Transverse colon (tissue), 4 donors: ENCODE measurements at regions of chr4 and their contacts with region 1.

Region 1: GRCh38 chr4:184845367-184846021 is 19.7 kb upstream of the ACSL1 start:
- DNase-seq: no peak
- H3K4me3 ChIP-seq: no peak overlapping the region
- H3K27ac ChIP-seq: no peak overlapping the region
- H3K4me1 ChIP-seq: no peaks in the 10 kb centered on the region
- H3K27me3 ChIP-seq: no peaks in the 10 kb centered on the region
- CTCF ChIP-seq: no peak
- EP300 ChIP-seq: no peak
- POLR2A ChIP-seq: no peak

Region 2: GRCh38 chr4:184825896-184826690 is 19.4 kb before region 1 on chr4 and contains the start of gene ACSL1:
- in situ Hi-C with region 1: no loop called
- intact Hi-C with region 1: no loop called
- DNase-seq: peak; percentile 76
- H3K4me3 ChIP-seq: peak within 1 kb of the TSS; percentile 69 to 85 (median 74)
- H3K27ac ChIP-seq: peak within 1 kb of the TSS; percentile 82 to 83 (median 82)
- H3K4me1 ChIP-seq: peaks cover 0 to 22% (median 11%) of the 10 kb centered on the region in 4 donors
- H3K27me3 ChIP-seq: no peaks in the 10 kb centered on the region
- CTCF ChIP-seq: no peak
- EP300 ChIP-seq: no peak
- POLR2A ChIP-seq: peak; percentile 37
- total RNA-seq, gene ACSL1: 20.6 to 50.0 (median 40.0) TPM

Region 3: DNA sequence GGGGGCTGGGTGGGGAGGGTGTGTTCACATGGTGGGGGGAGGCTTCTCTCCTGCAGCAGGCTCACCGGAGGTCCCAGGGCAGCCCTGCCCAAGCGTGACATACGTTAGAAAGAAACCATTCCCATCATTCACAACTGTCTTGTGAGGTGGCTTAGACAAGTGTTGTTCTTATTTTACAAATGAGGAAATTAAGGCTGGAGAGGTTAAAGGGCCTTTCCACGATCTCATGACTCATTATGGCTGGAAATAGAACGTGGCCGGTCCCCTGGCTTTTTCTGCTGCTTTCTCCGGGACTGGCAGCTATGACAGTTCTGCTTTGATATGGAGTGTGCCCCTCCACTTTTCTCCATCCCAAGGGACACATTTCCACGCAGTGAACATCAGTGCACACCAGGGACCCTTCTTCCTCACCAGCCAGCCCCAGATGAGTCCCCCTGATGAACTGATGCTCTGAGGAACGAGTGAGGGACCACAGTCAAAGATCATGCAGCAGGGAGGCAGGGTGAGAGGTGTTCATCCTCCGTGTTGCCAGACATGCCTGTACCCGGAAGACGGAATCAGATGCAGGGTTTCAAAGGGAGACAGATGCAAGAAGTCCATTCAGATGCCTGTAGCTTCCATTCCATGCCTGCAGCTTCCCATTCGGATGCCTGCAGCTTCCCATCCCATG is 44.3 kb after region 1 on chr4:
- in situ Hi-C with region 1: no loop called
- intact Hi-C with region 1: loop called (anchors 1 kb)
- DNase-seq: no peak
- H3K4me3 ChIP-seq: no peak overlapping the region
- H3K27ac ChIP-seq: no peak overlapping the region
- H3K4me1 ChIP-seq: no peaks in the 10 kb centered on the region
- H3K27me3 ChIP-seq: peaks cover 5% of the 10 kb centered on the region
- CTCF ChIP-seq: no peak
- EP300 ChIP-seq: no peak
- POLR2A ChIP-seq: no peak

Region 4: DNA sequence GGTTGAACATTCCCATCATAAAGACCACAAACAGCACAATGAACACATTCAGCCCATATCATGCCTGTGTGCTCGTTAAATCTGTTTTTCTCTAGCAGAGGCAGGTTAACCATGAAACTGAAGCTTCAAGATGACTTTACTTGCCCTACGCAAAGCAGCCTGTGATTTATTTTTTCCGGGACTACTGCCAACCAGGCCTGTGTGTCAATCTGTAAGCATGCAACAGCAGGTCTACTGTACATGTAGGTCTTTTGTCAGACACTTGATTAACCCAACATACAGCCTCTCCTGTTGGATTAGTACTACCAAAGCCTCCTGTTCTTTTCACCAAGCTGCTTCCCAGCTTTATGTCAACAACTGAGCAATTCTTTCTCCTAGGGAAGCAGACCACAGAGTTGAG is 65.8 kb after region 1 on chr4:
- in situ Hi-C with region 1: no loop called
- intact Hi-C with region 1: no loop called
- DNase-seq: peak; percentile 25
- H3K4me3 ChIP-seq: no peak overlapping the region
- H3K27ac ChIP-seq: no peak overlapping the region
- H3K4me1 ChIP-seq: peaks cover 0 to 5% (median 0%) of the 10 kb centered on the region in 4 donors
- H3K27me3 ChIP-seq: no peaks in the 10 kb centered on the region
- CTCF ChIP-seq: no peak
- EP300 ChIP-seq: no peak
- POLR2A ChIP-seq: no peak